WTC11 (cell line): ENCODE measurements at regions of chr19 and their contacts with region 1.

Region 1: GRCh38 chr19:2750808-2751443 is 11.1 kb upstream of the SLC39A3 start:
- DNase-seq: no peak
- ATAC-seq: no peak
- H3K4me3 Mint-ChIP-seq: no peak overlapping the region
- H3K27ac Mint-ChIP-seq: no peak overlapping the region
- H3K4me1 Mint-ChIP-seq: no peaks in the 10 kb centered on the region
- H3K27me3 Mint-ChIP-seq: peaks cover 9% of the 10 kb centered on the region
- CTCF ChIP-seq: no peak

Region 2: DNA sequence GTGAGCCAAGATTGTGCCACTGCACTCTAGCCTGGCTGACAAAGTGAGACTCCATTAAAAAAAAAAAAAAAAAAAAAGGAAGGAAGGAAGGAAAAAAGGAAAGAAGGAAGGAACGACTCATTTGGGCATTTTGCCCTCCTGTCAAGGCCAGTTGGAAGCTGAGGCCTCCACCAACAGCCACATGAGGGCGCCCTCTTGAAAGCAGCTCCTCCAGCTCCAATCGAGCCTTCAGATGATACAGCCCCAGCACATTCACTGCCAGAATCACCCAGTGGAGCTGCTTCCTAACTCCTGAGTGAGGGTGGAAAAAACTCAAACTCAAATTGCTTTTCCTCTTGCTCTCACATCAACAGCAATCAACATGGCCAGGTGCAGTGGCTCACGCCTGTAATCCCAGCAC is 89.3 kb before region 1 on chr19:
- CTCF ChIA-PET with region 1: interaction called, 10 read pairs
- POLR2A ChIA-PET with region 1: no interaction called
- DNase-seq: peak; percentile 46
- ATAC-seq: no peak
- H3K4me3 Mint-ChIP-seq: no peak overlapping the region
- H3K27ac Mint-ChIP-seq: no peak overlapping the region
- H3K4me1 Mint-ChIP-seq: no peaks in the 10 kb centered on the region
- H3K27me3 Mint-ChIP-seq: peaks cover 3% of the 10 kb centered on the region
- CTCF ChIP-seq: no peak

Region 3: DNA sequence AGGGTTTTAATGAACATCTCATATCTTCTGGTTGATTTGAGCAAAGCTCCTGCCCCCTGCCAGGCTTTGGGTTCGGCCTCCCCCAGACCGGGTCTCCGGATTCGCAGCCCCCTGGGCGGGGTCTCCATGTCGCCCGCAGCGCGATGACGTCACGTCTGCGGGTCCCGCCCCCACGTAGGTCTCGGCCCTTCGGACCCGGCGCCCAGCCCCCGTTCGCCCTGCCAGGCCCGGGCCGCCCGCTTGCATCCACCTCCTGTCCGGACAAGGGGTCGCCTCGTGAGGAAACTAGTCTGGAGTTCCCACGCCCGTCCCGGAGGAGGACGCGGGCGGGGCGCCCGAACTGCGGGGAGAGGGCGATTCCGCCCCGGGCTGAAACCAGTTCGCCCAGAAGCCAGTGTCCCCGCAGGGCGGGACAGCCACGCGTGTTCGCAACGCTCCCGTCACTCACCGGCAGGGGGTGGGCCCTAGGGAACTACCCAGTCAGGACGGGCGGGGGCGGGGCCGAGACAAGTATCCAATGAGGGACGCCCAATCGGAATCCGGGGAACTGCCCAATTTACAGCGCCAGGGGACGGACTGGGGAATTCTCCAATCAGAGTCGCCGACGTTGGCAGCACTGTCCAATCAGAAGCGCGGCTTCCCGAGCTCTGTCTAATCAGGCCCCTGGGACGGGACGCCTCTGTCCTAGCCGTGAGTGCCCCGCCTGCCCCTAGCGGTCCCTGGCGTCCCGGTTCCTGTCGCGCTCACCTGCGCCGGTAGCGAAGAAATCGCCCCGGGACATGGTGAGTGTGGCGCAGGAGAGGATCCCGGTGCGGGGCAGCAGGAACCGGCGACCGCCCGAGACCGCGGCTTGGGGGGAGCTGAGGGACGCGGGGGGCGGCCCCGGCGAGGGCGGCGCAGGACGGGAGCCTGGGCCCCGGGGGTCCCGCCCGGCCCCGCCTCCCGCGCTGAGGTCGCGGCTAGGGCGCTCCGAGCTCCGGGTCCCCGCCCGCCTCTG is 90.2 kb after region 1 on chr19 and contains the start of gene ZNF555:
- CTCF ChIA-PET with region 1: no interaction called
- POLR2A ChIA-PET with region 1: no interaction called
- DNase-seq: peak; percentile 98
- ATAC-seq: peak; percentile 98
- H3K4me3 Mint-ChIP-seq: peak within 1 kb of the TSS; percentile 79
- H3K27ac Mint-ChIP-seq: no peak within 1 kb of the TSS
- H3K4me1 Mint-ChIP-seq: peaks cover 5% of the 10 kb centered on the region
- H3K27me3 Mint-ChIP-seq: peaks cover 8% of the 10 kb centered on the region
- CTCF ChIP-seq: no peak; the same call in 1 of the 2 replicates
- total RNA-seq, gene ZNF555: 6.6 to 7.2 TPM (median 6.6 TPM) in 3 replicates